GM23248 (cell line): ENCODE measurements at regions of chr3 and their contacts with region 1.

Region 1: DNA sequence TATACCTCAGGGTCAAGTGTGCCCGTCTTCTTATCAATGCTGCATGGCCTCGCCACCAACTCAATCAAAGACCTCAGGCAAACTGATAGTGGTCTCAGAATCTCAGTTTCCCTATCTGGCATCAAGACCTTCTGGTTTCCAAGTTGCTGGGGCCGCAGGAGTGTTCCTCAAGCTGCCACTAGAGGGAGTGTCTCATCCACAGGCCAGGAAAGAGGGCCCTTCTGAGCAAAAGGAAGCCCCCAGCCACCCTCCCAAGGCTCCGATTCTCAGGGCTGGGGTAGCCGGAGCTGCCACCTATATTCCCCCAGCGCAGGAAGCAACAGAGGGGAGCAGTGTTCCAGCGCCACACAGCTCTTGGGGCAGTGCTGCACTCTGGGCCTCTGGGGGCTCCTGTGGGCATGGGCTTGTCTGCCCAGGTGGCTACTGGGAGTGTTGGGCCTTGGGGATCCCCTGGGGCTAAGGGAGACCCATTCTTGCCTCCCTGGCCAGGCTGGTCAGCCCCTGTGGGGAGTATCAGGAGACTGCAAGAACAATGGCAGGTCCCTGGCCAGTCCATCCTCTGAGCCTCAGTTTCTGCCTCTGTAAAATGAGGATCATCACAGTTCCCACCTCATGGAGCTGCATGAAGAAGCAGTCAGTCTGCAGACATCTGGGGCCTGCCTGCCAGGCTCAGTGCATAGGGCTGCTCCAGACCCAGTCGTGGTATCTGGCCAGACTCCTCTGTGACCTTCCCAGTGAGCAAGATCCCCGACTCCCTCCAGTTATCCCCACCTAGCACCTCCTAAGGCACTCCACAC is 23.4 kb upstream of the SEC13 start:
- DNase-seq: peak; percentile 49
- H3K4me3 ChIP-seq: no peak overlapping the region
- H3K27ac ChIP-seq: no peak overlapping the region
- H3K4me1 ChIP-seq: no peaks in the 10 kb centered on the region
- H3K27me3 ChIP-seq: peaks cover 11% of the 10 kb centered on the region; the same call in 1 of the 2 replicates

Region 2: DNA sequence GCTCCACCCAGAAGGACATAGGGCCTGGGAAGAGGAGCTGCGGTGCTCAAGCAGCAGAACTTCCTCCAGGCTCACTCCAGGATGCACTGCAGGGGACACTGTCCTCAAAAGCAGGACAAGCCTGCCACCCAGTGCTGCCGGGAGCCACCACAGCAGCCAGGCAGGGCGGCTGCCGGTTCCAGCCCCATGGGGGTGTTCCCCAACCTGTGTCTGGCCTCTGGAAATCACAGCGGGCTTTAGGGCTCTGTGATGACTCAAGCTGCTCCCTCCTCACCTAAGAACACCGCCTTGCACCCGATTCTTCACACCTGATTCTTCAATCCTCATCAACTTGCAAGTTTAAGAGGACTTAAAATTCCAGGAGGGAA is 399.7 kb after region 1 on chr3:
- in situ Hi-C with region 1: loop called (anchors 10 kb)
- DNase-seq: peak; percentile 8
- H3K4me3 ChIP-seq: no peak overlapping the region
- H3K27ac ChIP-seq: no peak overlapping the region
- H3K4me1 ChIP-seq: no peaks in the 10 kb centered on the region
- H3K27me3 ChIP-seq: no peaks in the 10 kb centered on the region